Activated T-helper 2 cell treated with anti-CD3 and anti-CD28 coated beads, Interferon-gamma antibody, Interleukin-2, Interleukin-4, amounts not matched to agents 10 μg/mL and 5 μg/mL and 100 μg/mL, durations not matched to agents 14 hours and 24 hours and 36 hours (primary cell): ENCODE measurements at regions of chr12 and their contacts with region 1.

Region 1: GRCh38 chr12:103548622-103549601 is 38.2 kb upstream of the STAB2 start:
- DNase-seq: peak; percentile 47
- H3K4me3 Mint-ChIP-seq: no peak overlapping the region
- H3K27ac Mint-ChIP-seq: no peak overlapping the region
- H3K4me1 Mint-ChIP-seq: peaks cover 2% of the 10 kb centered on the region
- H3K27me3 Mint-ChIP-seq: peaks cover 16% of the 10 kb centered on the region

Region 2: GRCh38 chr12:102883204-102883799 is 665.6 kb before region 1 on chr12:
- intact Hi-C with region 1: loop called (anchors 1 kb)
- DNase-seq: peak; percentile 10
- H3K4me3 Mint-ChIP-seq: no peak overlapping the region
- H3K27ac Mint-ChIP-seq: no peak overlapping the region
- H3K4me1 Mint-ChIP-seq: peaks cover 5% of the 10 kb centered on the region
- H3K27me3 Mint-ChIP-seq: peaks cover 4% of the 10 kb centered on the region

Region 3: DNA sequence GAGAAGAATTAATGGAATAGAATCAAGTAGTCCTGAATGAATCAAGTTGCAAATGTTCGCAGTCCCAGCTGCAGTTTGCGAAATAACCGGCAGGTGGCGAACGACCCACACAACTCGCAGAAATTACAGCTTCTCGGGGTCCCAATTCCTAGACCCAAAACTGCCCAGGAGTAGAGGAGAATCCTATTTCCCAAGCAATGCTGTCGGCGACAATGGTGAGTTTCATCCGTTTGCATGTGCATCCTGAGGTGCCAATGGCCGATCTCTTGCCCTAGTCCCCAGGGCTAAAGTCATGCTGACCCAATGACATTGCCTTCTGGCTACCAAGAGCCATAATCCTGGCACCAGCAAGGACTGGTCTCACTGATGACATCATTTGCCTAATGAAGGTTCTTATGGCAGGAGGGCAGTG is 600.0 kb before region 1 on chr12:
- intact Hi-C with region 1: loop called (anchors 1 kb)
- DNase-seq: no peak
- H3K4me3 Mint-ChIP-seq: no peak overlapping the region
- H3K27ac Mint-ChIP-seq: no peak overlapping the region
- H3K4me1 Mint-ChIP-seq: peaks cover 11% of the 10 kb centered on the region
- H3K27me3 Mint-ChIP-seq: peaks cover 60% of the 10 kb centered on the region

Region 4: GRCh38 chr12:103326190-103326589 is 222.7 kb before region 1 on chr12:
- intact Hi-C with region 1: loop called (anchors 10 kb)
- DNase-seq: no peak
- H3K4me3 Mint-ChIP-seq: no peak overlapping the region
- H3K27ac Mint-ChIP-seq: no peak overlapping the region
- H3K4me1 Mint-ChIP-seq: no peaks in the 10 kb centered on the region
- H3K27me3 Mint-ChIP-seq: no peaks in the 10 kb centered on the region

Region 5: GRCh38 chr12:103415681-103416080 is 133.2 kb before region 1 on chr12:
- intact Hi-C with region 1: no loop called
- DNase-seq: no peak
- H3K4me3 Mint-ChIP-seq: no peak overlapping the region
- H3K27ac Mint-ChIP-seq: no peak overlapping the region
- H3K4me1 Mint-ChIP-seq: no peaks in the 10 kb centered on the region
- H3K27me3 Mint-ChIP-seq: no peaks in the 10 kb centered on the region

Region 6: GRCh38 chr12:103441437-103442181 is 107.3 kb before region 1 on chr12:
- intact Hi-C with region 1: loop called (anchors 1 kb)
- DNase-seq: peak; percentile 44
- H3K4me3 Mint-ChIP-seq: peak overlapping the region; percentile 61
- H3K27ac Mint-ChIP-seq: peak overlapping the region; percentile 86
- H3K4me1 Mint-ChIP-seq: peaks cover 13% of the 10 kb centered on the region
- H3K27me3 Mint-ChIP-seq: no peaks in the 10 kb centered on the region

Region 7: GRCh38 chr12:103495479-103496456 is 53.1 kb before region 1 on chr12 and contains the start of gene C12orf42:
- intact Hi-C with region 1: loop called (anchors 1 kb)
- DNase-seq: peak; percentile 25
- H3K4me3 Mint-ChIP-seq: peak within 1 kb of the TSS; percentile 75
- H3K27ac Mint-ChIP-seq: no peak within 1 kb of the TSS
- H3K4me1 Mint-ChIP-seq: peaks cover 24% of the 10 kb centered on the region
- H3K27me3 Mint-ChIP-seq: peaks cover 43% of the 10 kb centered on the region
- total RNA-seq, gene C12orf42: not detected in 2 replicates

Region 8: GRCh38 chr12:103564305-103564704 is 15.4 kb after region 1 on chr12:
- intact Hi-C with region 1: no loop called
- DNase-seq: no peak
- H3K4me3 Mint-ChIP-seq: no peak overlapping the region
- H3K27ac Mint-ChIP-seq: no peak overlapping the region
- H3K4me1 Mint-ChIP-seq: no peaks in the 10 kb centered on the region
- H3K27me3 Mint-ChIP-seq: peaks cover 14% of the 10 kb centered on the region